GM10248 (cell line): ENCODE measurements at regions of chr22 and their contacts with region 1.

Region 1: DNA sequence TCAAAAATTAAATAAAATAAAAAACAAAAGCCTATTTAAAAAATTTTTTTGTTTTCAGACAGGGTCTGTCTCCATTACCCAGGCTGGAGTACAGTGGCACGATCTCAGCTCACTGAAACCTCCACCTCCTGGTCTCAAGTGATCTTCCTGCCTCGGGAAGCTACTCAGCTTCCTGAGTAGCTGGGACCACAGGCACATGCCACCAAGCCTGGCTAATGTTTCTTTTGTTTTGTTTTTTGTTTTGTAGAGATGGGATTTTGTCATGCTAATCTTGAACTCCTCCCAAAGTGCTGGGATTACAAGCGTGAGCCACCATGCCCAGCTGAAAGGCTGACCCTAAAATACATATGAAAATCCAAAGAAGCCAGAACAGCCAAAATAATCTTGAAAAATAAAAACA is 20.4 kb upstream of the L3MBTL2 start:
- DNase-seq: no peak
- CTCF ChIP-seq: no peak

Region 2: DNA sequence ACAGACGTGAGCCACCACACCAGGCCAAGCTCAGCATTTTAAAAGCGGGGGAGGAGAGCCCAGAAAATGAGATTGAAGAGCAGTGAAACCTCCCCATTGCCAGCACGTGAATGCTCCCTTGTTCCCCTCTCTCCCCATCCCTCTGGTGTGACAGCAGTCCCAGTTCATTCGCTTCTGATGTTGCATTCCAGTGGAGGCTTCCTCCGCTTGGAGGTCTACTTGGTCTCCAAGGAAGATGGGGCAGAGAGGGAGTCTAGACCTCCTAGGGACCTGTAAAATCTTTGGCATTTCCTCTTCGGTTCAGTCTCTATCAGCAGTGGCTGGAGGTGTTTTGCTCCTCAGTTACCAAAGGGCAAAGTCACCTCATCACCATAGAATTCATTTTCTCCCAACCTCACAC is 122.5 kb before region 1 on chr22:
- CTCF ChIA-PET with region 1: no interaction called
- POLR2A ChIA-PET with region 1: no interaction called
- DNase-seq: no peak
- CTCF ChIP-seq: no peak

Region 3: GRCh38 chr22:41197038-41197972 is 12.6 kb after region 1 on chr22:
- CTCF ChIA-PET with region 1: interaction called, 17 read pairs
- POLR2A ChIA-PET with region 1: no interaction called
- DNase-seq: peak; percentile 93
- CTCF ChIP-seq: no peak

Region 4: GRCh38 chr22:41367039-41367679 is 182.5 kb after region 1 on chr22:
- CTCF ChIA-PET with region 1: no interaction called
- POLR2A ChIA-PET with region 1: no interaction called
- DNase-seq: no peak
- CTCF ChIP-seq: no peak